Caco-2 (cell line): ENCODE measurements at regions of chr9 and their contacts with region 1.

Region 1: DNA sequence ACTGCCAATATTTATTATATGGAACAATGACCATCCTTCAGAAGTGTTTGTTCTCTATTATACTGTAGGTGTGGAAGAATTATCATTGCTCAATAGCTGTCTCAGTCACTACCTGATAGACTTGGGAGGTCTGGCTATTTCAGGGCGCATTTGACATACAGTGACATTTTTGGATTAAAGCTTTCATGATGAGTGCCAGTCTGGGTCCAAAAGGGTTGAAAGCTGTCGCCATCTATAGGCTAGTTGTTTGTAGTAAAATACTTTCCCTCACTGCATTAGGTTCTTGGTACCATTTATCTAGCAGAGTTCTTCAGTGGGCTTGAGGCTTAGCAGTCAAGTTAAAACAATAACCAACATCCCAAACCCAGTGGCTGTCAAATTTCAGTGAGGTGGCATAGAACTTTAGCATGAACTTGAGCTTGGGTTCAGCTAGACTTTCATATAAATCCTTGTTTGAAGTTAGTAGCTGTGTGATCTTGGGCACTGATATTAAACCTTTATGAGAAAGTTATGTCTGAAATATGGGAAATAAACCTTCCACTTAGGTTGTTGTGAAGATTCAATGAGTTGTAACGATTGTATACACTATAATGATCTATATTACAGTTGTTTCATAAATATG is 110.5 kb upstream of the CDKN2B start:
- DNase-seq: peak in 1 of 2 experiments; percentile 24
- H3K4me3 ChIP-seq: no peak overlapping the region
- H3K4me3 Mint-ChIP-seq: no peak overlapping the region
- H3K27ac Mint-ChIP-seq: no peak overlapping the region
- H3K4me1 ChIP-seq: peaks cover 34% of the 10 kb centered on the region
- H3K4me1 Mint-ChIP-seq: peaks cover 24% of the 10 kb centered on the region
- H3K27me3 ChIP-seq: no peaks in the 10 kb centered on the region
- H3K27me3 Mint-ChIP-seq: no peaks in the 10 kb centered on the region
- CTCF ChIP-seq: peak in 1 of 2 experiments; percentile 29

Region 2: GRCh38 chr9:21933865-21934264 is 185.8 kb before region 1 on chr9:
- CTCF ChIA-PET with region 1: no interaction called
- POLR2A ChIA-PET with region 1: no interaction called
- intact Hi-C with region 1: loop called (anchors 1 kb)
- DNase-seq: no peak
- H3K4me3 ChIP-seq: no peak overlapping the region
- H3K4me3 Mint-ChIP-seq: no peak overlapping the region
- H3K27ac Mint-ChIP-seq: no peak overlapping the region
- H3K4me1 ChIP-seq: no peaks in the 10 kb centered on the region
- H3K4me1 Mint-ChIP-seq: no peaks in the 10 kb centered on the region
- H3K27me3 ChIP-seq: no peaks in the 10 kb centered on the region
- H3K27me3 Mint-ChIP-seq: no peaks in the 10 kb centered on the region
- CTCF ChIP-seq: no peak

Region 3: GRCh38 chr9:22008736-22009562 is 110.7 kb before region 1 on chr9 and contains the start of gene CDKN2B:
- CTCF ChIA-PET with region 1: interaction called, 26 read pairs
- POLR2A ChIA-PET with region 1: no interaction called
- intact Hi-C with region 1: no loop called
- DNase-seq: peak; percentile 94 to 96
- H3K4me3 ChIP-seq: peak within 1 kb of the TSS; percentile 91
- H3K4me3 Mint-ChIP-seq: peak within 1 kb of the TSS; percentile 100
- H3K27ac Mint-ChIP-seq: peak within 1 kb of the TSS; percentile 51
- H3K4me1 ChIP-seq: no peaks in the 10 kb centered on the region
- H3K4me1 Mint-ChIP-seq: no peaks in the 10 kb centered on the region
- H3K27me3 ChIP-seq: no peaks in the 10 kb centered on the region
- H3K27me3 Mint-ChIP-seq: no peaks in the 10 kb centered on the region
- CTCF ChIP-seq: peak; percentile 53 to 79
- total RNA-seq, gene CDKN2B: 7.6 and 8.2 TPM in 2 replicates

Region 4: GRCh38 chr9:22037954-22038690 is 81.5 kb before region 1 on chr9:
- CTCF ChIA-PET with region 1: interaction called, 3 read pairs
- POLR2A ChIA-PET with region 1: no interaction called
- intact Hi-C with region 1: loop called (anchors 2 kb)
- DNase-seq: no peak
- H3K4me3 ChIP-seq: no peak overlapping the region
- H3K4me3 Mint-ChIP-seq: no peak overlapping the region
- H3K27ac Mint-ChIP-seq: no peak overlapping the region
- H3K4me1 ChIP-seq: peaks cover 14% of the 10 kb centered on the region
- H3K4me1 Mint-ChIP-seq: no peaks in the 10 kb centered on the region
- H3K27me3 ChIP-seq: no peaks in the 10 kb centered on the region
- H3K27me3 Mint-ChIP-seq: no peaks in the 10 kb centered on the region
- CTCF ChIP-seq: peak; percentile 26 to 43

Region 5: DNA sequence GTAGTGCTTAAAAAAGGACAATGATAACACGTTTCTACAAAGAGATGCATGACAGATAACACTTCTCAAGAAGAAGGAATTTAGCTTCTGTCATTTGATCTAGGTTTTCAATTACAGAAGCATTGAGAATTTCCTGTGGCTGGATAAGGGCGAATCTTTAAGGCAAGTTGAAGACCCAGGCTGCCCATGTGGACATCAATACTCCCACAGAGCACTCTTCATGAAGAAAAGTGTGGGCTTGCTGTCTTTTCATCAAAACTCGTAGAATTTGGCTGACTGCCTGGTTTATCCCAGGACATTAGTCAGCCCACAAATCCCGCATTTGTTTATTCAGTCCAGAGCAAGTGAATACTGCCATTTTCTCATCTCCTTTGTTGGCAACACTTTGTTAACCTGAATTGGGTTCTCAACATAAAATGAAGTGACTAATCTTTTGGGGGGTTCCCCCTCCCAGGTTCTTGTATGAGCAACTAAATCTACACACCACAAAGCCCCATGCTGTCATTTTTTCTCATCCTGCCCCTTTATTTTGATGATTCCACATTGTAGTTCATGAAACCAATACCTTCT is 67.2 kb before region 1 on chr9:
- CTCF ChIA-PET with region 1: interaction called, 6 read pairs
- POLR2A ChIA-PET with region 1: no interaction called
- intact Hi-C with region 1: loop called (anchors 2 kb)
- DNase-seq: no peak
- H3K4me3 ChIP-seq: no peak overlapping the region
- H3K4me3 Mint-ChIP-seq: no peak overlapping the region
- H3K27ac Mint-ChIP-seq: no peak overlapping the region
- H3K4me1 ChIP-seq: no peaks in the 10 kb centered on the region
- H3K4me1 Mint-ChIP-seq: no peaks in the 10 kb centered on the region
- H3K27me3 ChIP-seq: no peaks in the 10 kb centered on the region
- H3K27me3 Mint-ChIP-seq: no peaks in the 10 kb centered on the region
- CTCF ChIP-seq: no peak

Region 6: GRCh38 chr9:22107147-22108045 is 12.3 kb before region 1 on chr9:
- CTCF ChIA-PET with region 1: interaction called, 6 read pairs
- POLR2A ChIA-PET with region 1: no interaction called
- intact Hi-C with region 1: loop called (anchors 1 kb)
- DNase-seq: peak in 1 of 2 experiments; percentile 49
- H3K4me3 ChIP-seq: no peak overlapping the region
- H3K4me3 Mint-ChIP-seq: no peak overlapping the region
- H3K27ac Mint-ChIP-seq: no peak overlapping the region
- H3K4me1 ChIP-seq: peaks cover 55% of the 10 kb centered on the region
- H3K4me1 Mint-ChIP-seq: peaks cover 37% of the 10 kb centered on the region
- H3K27me3 ChIP-seq: no peaks in the 10 kb centered on the region
- H3K27me3 Mint-ChIP-seq: no peaks in the 10 kb centered on the region
- CTCF ChIP-seq: no peak

Region 7: GRCh38 chr9:22238809-22239684 is 119.4 kb after region 1 on chr9:
- CTCF ChIA-PET with region 1: no interaction called
- POLR2A ChIA-PET with region 1: no interaction called
- intact Hi-C with region 1: loop called (anchors 2 kb)
- DNase-seq: no peak
- H3K4me3 ChIP-seq: no peak overlapping the region
- H3K4me3 Mint-ChIP-seq: no peak overlapping the region
- H3K27ac Mint-ChIP-seq: peak overlapping the region; percentile 56
- H3K4me1 ChIP-seq: peaks cover 20% of the 10 kb centered on the region
- H3K4me1 Mint-ChIP-seq: peaks cover 17% of the 10 kb centered on the region
- H3K27me3 ChIP-seq: no peaks in the 10 kb centered on the region
- H3K27me3 Mint-ChIP-seq: peaks cover 6% of the 10 kb centered on the region
- CTCF ChIP-seq: peak; percentile 10 to 39

Region 8: DNA sequence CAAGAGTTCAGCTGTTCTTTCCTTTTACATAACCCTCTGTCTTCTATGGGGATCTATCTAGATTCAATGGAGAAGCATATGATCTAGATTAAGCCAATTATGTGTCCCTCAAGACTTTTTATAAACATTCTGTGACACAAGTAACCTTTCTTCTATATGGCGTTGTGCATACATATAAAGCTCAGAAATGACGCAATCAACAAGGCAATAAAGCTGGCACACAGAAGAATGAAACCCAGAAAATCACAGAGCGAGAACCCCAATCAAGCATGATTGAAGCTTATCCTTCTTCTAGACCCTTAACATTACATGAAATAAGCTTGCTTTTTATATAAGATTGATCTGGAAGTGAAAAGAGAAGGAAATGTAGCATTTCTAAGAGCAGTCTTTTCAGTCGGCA is 505.9 kb after region 1 on chr9:
- CTCF ChIA-PET with region 1: no interaction called
- POLR2A ChIA-PET with region 1: no interaction called
- intact Hi-C with region 1: no loop called
- DNase-seq: no peak
- H3K4me3 ChIP-seq: no peak overlapping the region
- H3K4me3 Mint-ChIP-seq: no peak overlapping the region
- H3K27ac Mint-ChIP-seq: no peak overlapping the region
- H3K4me1 ChIP-seq: no peaks in the 10 kb centered on the region
- H3K4me1 Mint-ChIP-seq: no peaks in the 10 kb centered on the region
- H3K27me3 ChIP-seq: no peaks in the 10 kb centered on the region
- H3K27me3 Mint-ChIP-seq: peaks cover 3% of the 10 kb centered on the region
- CTCF ChIP-seq: no peak

Region 9: DNA sequence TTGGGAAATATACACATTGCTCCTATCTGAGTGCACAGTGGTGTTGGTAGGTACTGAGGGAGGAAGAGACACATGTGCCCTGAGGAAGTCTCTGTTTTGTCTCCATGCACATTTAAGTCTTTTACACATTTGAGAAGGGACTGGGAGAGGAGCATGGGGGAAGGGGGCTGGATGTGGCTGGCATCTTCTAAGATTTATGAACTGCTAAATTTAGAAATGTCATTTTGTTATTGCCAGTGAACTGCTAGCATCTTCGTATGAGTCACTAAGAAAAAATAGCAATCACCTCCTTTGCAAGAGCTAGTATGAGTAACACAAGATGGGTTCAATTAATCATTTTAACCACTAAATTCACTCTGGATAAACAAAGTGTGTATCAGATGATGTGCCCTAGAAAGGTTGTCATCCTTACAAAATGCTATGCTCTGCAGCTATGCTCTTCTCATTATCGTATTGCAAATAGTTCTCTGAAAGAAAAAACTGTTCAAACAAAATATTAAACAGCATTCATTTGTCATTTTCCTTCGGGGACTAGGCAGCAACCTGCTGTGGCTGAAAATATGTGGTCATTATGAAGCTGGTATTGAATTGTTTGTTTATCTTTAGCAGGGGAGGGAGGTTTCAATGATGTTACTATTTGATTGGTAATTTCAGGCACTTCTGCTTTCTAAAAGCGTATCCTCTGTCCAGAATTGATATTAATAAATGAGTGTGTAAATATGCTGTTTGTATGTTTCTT is 563.5 kb after region 1 on chr9:
- CTCF ChIA-PET with region 1: no interaction called
- POLR2A ChIA-PET with region 1: no interaction called
- intact Hi-C with region 1: no loop called
- DNase-seq: no peak
- H3K4me3 ChIP-seq: no peak overlapping the region
- H3K4me3 Mint-ChIP-seq: no peak overlapping the region
- H3K27ac Mint-ChIP-seq: no peak overlapping the region
- H3K4me1 ChIP-seq: no peaks in the 10 kb centered on the region
- H3K4me1 Mint-ChIP-seq: no peaks in the 10 kb centered on the region
- H3K27me3 ChIP-seq: no peaks in the 10 kb centered on the region
- H3K27me3 Mint-ChIP-seq: no peaks in the 10 kb centered on the region
- CTCF ChIP-seq: no peak